ENCODE measurements at regions of chr2 and their contacts with region 1.

Region 1: GRCh38 chr2:134118279-134119116 is 135.4 kb upstream of the MGAT5 start:
- DNase-seq: peak; percentile 92 to 94
- ATAC-seq: peak; percentile 82
- H3K4me3 ChIP-seq: no peak overlapping the region
- H3K27ac ChIP-seq: peak overlapping the region in 1 of 2 donors; percentile 69
- H3K4me1 ChIP-seq: peaks cover 3% of the 10 kb centered on the region in 2 donors
- H3K27me3 ChIP-seq: no peaks in the 10 kb centered on the region

Region 2: GRCh38 chr2:134193006-134193405 is 74.5 kb after region 1 on chr2:
- intact Hi-C with region 1: loop called in 1 of 2 experiments (anchors 5 kb)
- DNase-seq: no peak
- ATAC-seq: peak; percentile 80
- H3K4me3 ChIP-seq: no peak overlapping the region
- H3K27ac ChIP-seq: no peak overlapping the region
- H3K4me1 ChIP-seq: peaks cover 0 to 7% of the 10 kb centered on the region in 2 donors
- H3K27me3 ChIP-seq: no peaks in the 10 kb centered on the region

Region 3: DNA sequence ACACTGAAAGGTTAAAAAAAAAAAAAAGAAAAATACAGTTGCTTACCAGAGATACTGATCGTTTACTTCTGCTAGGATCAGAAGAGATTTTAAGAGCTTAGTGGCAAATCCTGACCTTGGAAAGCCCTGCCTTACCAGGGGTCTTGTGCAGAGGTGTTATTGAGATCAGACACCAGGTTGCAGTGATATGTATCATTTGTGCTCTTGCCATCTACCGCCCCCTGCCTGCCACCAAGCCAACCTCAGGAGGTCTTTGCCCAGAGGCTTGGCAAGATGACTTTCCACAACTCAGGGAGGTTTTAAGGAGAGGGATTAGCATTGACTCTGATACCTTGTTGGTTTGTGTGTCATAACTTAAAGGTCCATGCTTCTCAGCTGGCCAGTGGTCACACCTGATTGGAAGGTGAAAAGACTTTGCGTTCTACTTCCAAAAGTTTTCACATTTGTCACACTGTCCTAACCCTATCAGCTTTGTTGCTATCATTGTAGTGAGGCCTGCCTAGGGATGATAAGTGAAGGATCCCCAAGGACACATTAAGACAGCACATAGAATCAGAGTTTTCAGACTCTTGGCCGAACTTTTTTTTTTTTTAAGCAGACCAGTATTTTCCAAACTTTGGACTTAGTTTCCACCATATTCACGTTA is 89.2 kb after region 1 on chr2:
- intact Hi-C with region 1: loop called (anchors 5 kb)
- DNase-seq: peak; percentile 69 to 86
- ATAC-seq: no peak
- H3K4me3 ChIP-seq: no peak overlapping the region
- H3K27ac ChIP-seq: no peak overlapping the region
- H3K4me1 ChIP-seq: no peaks in the 10 kb centered on the region
- H3K27me3 ChIP-seq: no peaks in the 10 kb centered on the region

Region 4: DNA sequence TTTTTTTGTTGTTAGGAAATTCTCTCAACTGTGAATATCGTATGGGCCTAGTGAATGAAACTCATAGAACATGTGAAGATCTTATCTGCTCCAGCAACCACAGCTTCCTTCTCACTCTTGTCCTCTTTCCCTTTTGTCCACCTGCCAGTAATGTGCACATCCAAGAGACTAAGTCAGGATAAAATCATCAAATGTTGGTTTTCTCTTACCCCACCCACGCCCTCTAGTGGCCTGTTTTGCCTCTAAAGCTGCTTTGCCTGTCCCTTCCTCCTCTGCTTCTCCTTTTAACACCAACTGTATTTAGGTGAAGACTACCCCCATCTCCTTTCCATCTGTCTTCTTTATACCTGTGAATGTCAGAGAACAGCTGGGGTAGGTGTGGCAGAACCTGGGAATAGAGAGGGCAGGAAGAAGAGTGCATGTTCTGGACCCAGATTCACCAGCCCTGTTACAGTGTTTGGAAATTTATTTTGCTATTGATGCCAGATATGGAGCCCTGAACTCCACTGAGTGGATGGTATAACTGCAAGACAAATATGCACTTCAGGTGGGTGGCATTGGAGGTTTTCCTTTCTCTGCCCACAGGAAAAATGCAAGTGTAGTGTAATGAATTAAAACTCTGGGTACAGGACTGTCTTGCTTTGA is 127.0 kb after region 1 on chr2:
- intact Hi-C with region 1: loop called (anchors 2 kb)
- DNase-seq: peak; percentile 87 to 88
- ATAC-seq: peak; percentile 81
- H3K4me3 ChIP-seq: no peak overlapping the region
- H3K27ac ChIP-seq: no peak overlapping the region
- H3K4me1 ChIP-seq: no peaks in the 10 kb centered on the region
- H3K27me3 ChIP-seq: no peaks in the 10 kb centered on the region

Region 5: GRCh38 chr2:134411828-134412638 is 293.5 kb after region 1 on chr2:
- intact Hi-C with region 1: loop called (anchors 2 to 5 kb)
- DNase-seq: peak; percentile 76 to 80
- ATAC-seq: peak; percentile 95
- H3K4me3 ChIP-seq: no peak overlapping the region
- H3K27ac ChIP-seq: no peak overlapping the region
- H3K4me1 ChIP-seq: no peaks in the 10 kb centered on the region
- H3K27me3 ChIP-seq: no peaks in the 10 kb centered on the region